Dorsolateral prefrontal cortex (tissue), 120 donors: ENCODE measurements at regions of chr21 and their contacts with region 1.

Region 1: GRCh38 chr21:37220981-37221664 is 46.0 kb downstream of the VPS26C start:
- DNase-seq: peak; percentile 91 to 97 (median 96)
- H3K4me3 ChIP-seq: peak overlapping the region; percentile 39 to 96 (median 79)
- H3K27ac ChIP-seq: peak overlapping the region; percentile 2 to 93 (median 82)
- H3K27me3 ChIP-seq: no peaks in the 10 kb centered on the region
- CTCF ChIP-seq: peak; percentile 52 to 92 (median 74)

Region 2: DNA sequence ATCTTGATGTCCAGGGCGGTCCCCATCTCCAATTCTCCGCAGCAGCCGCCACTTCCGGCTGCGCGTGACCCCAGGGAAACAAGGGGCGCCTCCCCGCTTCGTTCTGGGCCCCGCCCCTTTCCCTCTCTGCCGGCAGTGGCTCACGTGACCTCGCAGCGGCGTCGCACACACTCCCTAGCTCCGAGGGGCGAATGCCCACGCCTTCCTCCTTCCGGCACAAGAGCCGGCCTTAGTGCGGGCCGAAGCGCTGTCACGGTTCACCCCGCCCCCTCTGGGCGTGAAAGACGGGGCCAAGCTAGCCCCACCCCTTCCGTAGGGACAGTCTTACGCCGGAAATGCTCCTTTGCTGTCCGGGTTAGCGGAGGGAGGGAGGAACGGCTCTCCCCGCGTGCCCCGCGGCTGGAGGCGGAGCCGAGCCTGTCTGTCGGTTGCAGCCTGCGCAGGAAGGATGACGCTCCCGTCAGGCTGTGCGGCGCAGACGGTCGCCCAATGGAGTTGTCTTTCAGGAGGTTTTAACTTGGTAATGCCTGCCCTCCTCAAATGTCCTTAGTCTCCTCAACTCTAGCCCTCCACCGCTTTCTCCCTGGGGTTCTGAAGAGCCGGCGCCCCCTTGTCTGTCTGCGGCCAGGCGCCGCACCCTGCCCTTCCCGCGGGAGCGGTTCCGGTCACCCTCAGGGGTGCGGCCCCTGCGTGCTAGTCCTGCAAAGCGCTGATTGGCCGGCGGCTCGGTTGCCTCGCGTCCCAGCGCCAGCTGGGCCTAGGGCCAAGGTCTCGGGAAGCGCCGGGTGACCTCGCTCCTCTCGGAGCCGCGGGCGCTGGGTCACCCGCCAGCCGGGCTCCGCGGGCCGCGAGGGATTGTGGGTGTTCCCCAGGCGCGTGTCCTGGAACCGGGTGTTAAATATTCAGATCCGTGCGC is 46.4 kb after region 1 on chr21 and contains the start of gene VPS26C:
- intact Hi-C with region 1: loop called (anchors 1 to 5 kb)
- DNase-seq: peak; percentile 94 to 99 (median 98)
- H3K4me3 ChIP-seq: peak within 1 kb of the TSS; percentile 62 to 99 (median 92)
- H3K27ac ChIP-seq: peak within 1 kb of the TSS; percentile 89 to 100 (median 98)
- H3K27me3 ChIP-seq: no peaks in the 10 kb centered on the region
- CTCF ChIP-seq: peak in 20 of 56 donors; percentile 5 to 38 (median 18)
- total RNA-seq, gene VPS26C: 32.9 to 58.9 (median 44.4) TPM

Region 3: GRCh38 chr21:37675202-37675801 is 454.2 kb after region 1 on chr21:
- intact Hi-C with region 1: loop called in 1 of 2 experiments (anchors 10 kb)
- DNase-seq: peak; percentile 63 to 81 (median 76)
- H3K4me3 ChIP-seq: peak overlapping the region in 56 of 59 donors; percentile 11 to 64 (median 48)
- H3K27ac ChIP-seq: peak overlapping the region in 3 of 59 donors; percentile 19 to 67 (median 60)
- H3K27me3 ChIP-seq: peaks cover 0 to 19% (median 0%) of the 10 kb centered on the region in 45 donors
- CTCF ChIP-seq: peak; percentile 74 to 96 (median 91)